Sigmoid colon (tissue), 7 donors: ENCODE measurements at regions of chr14 and their contacts with region 1.

Region 1: GRCh38 chr14:54652188-54652587 is 85.3 kb downstream of the SAMD4A start:
- DNase-seq: peak; percentile 97
- H3K4me3 ChIP-seq: peak overlapping the region; percentile 7 to 32 (median 18)
- H3K27ac ChIP-seq: peak overlapping the region; percentile 83 to 96 (median 86)
- H3K4me1 ChIP-seq: peaks cover 0 to 69% (median 60%) of the 10 kb centered on the region in 4 donors
- H3K27me3 ChIP-seq: no peaks in the 10 kb centered on the region
- CTCF ChIP-seq: no peak
- EP300 ChIP-seq: peak in 3 of 4 donors; percentile 18 to 64 (median 63)
- POLR2A ChIP-seq: no peak

Region 2: GRCh38 chr14:54387328-54387727 is 264.9 kb before region 1 on chr14:
- intact Hi-C with region 1: no loop called
- DNase-seq: no peak
- H3K4me3 ChIP-seq: no peak overlapping the region
- H3K27ac ChIP-seq: no peak overlapping the region
- H3K4me1 ChIP-seq: no peaks in the 10 kb centered on the region
- H3K27me3 ChIP-seq: no peaks in the 10 kb centered on the region
- CTCF ChIP-seq: no peak
- EP300 ChIP-seq: no peak
- POLR2A ChIP-seq: no peak

Region 3: GRCh38 chr14:54622192-54622958 is 29.8 kb before region 1 on chr14:
- intact Hi-C with region 1: no loop called
- DNase-seq: no peak
- H3K4me3 ChIP-seq: no peak overlapping the region
- H3K27ac ChIP-seq: no peak overlapping the region
- H3K4me1 ChIP-seq: peaks cover 0 to 63% (median 50%) of the 10 kb centered on the region in 4 donors
- H3K27me3 ChIP-seq: no peaks in the 10 kb centered on the region
- CTCF ChIP-seq: no peak
- EP300 ChIP-seq: no peak
- POLR2A ChIP-seq: no peak

Region 4: DNA sequence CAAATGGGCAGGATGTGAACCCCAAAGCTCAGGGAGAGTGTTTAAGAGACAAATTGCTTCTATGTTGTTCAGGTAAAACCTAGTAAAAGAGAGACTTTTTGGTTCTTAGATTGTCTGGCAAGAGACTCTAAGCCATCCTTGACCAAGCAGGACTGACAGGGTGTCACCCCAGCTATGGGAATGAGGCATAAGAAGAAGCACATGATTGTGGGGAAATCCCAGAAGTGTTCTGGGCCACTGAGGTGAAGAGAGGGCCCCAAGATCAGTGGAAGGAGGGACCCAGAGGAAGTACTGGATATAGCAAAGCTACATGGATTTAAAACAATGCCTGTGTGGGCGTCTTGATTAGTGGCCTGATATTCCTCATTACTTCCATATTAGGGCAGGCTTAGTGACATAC is 13.8 kb after region 1 on chr14:
- intact Hi-C with region 1: loop called (anchors 2 kb)
- DNase-seq: no peak
- H3K4me3 ChIP-seq: no peak overlapping the region
- H3K27ac ChIP-seq: peak overlapping the region in 2 of 4 donors; percentile 45 to 89
- H3K4me1 ChIP-seq: peaks cover 0 to 69% (median 49%) of the 10 kb centered on the region in 4 donors
- H3K27me3 ChIP-seq: no peaks in the 10 kb centered on the region
- CTCF ChIP-seq: no peak
- EP300 ChIP-seq: no peak
- POLR2A ChIP-seq: no peak